CD4-positive, alpha-beta memory T cell (primary cell): ENCODE measurements at regions of chr1 and their contacts with region 1.

Region 1: DNA sequence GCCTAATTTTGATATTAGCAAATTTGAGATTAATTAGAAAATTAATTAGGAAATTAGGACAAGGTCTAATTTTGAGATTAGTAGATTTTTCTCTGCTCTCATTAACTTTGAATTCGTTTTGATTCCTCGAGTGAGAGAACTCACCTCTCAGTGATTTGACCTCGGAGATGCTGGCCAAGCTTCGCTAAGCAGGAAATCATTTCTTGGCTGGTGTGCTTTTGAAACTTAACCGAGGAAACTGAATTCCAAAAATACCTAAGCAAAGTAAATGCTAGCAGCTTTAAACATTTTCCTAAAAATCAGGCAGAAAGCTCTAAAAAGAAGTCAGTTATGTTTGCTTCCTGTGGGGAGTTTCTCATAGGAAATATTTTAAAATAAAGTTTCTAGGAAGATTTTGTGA is 34.9 kb downstream of the CDC14A start:
- DNase-seq: no peak
- H3K4me3 ChIP-seq: no peak overlapping the region
- H3K4me3 Mint-ChIP-seq: peak overlapping the region; percentile 67 to 80 (median 73)
- H3K27ac ChIP-seq: peak overlapping the region; percentile 65
- H3K27ac Mint-ChIP-seq: peak overlapping the region; percentile 89 to 95 (median 93)
- H3K4me1 ChIP-seq: peaks cover 98% of the 10 kb centered on the region
- H3K4me1 Mint-ChIP-seq: peaks cover 69 to 98% (median 87%) of the 10 kb centered on the region in 4 donors
- H3K27me3 ChIP-seq: no peaks in the 10 kb centered on the region
- H3K27me3 Mint-ChIP-seq: no peaks in the 10 kb centered on the region

Region 2: GRCh38 chr1:100358210-100358609 is 29.0 kb before region 1 on chr1:
- CTCF ChIA-PET with region 1: interaction called, 14 read pairs
- POLR2A ChIA-PET with region 1: interaction called, 283 read pairs
- intact Hi-C with region 1: loop called (anchors 2 kb)
- DNase-seq: no peak
- H3K4me3 ChIP-seq: no peak overlapping the region
- H3K4me3 Mint-ChIP-seq: peak overlapping the region; percentile 53 to 100 (median 96)
- H3K27ac ChIP-seq: no peak overlapping the region
- H3K27ac Mint-ChIP-seq: peak overlapping the region; percentile 5 to 97 (median 66)
- H3K4me1 ChIP-seq: peaks cover 85% of the 10 kb centered on the region
- H3K4me1 Mint-ChIP-seq: peaks cover 63 to 98% (median 79%) of the 10 kb centered on the region in 4 donors
- H3K27me3 ChIP-seq: no peaks in the 10 kb centered on the region
- H3K27me3 Mint-ChIP-seq: no peaks in the 10 kb centered on the region

Region 3: GRCh38 chr1:100443811-100444571 is 56.8 kb after region 1 on chr1:
- CTCF ChIA-PET with region 1: interaction called, 5 read pairs
- POLR2A ChIA-PET with region 1: interaction called, 10 read pairs
- intact Hi-C with region 1: no loop called
- DNase-seq: peak; percentile 52 to 69 (median 61)
- H3K4me3 ChIP-seq: peak overlapping the region; percentile 8 to 26
- H3K4me3 Mint-ChIP-seq: peak overlapping the region; percentile 74 to 91 (median 80)
- H3K27ac ChIP-seq: peak overlapping the region; percentile 96
- H3K27ac Mint-ChIP-seq: peak overlapping the region; percentile 98 to 100 (median 99)
- H3K4me1 ChIP-seq: peaks cover 99% of the 10 kb centered on the region
- H3K4me1 Mint-ChIP-seq: peaks cover 65 to 93% (median 75%) of the 10 kb centered on the region in 4 donors
- H3K27me3 ChIP-seq: no peaks in the 10 kb centered on the region
- H3K27me3 Mint-ChIP-seq: no peaks in the 10 kb centered on the region